ENCODE measurements at regions of chr14 and their contacts with region 1.

Region 1: GRCh38 chr14:71591929-71592328 is 340.3 kb upstream of the RGS6 start:
- DNase-seq: no peak
- H3K4me3 Mint-ChIP-seq: no peak overlapping the region
- H3K27ac Mint-ChIP-seq: peak overlapping the region; percentile 60
- H3K4me1 Mint-ChIP-seq: peaks cover 70% of the 10 kb centered on the region
- H3K27me3 Mint-ChIP-seq: no peaks in the 10 kb centered on the region

Region 2: DNA sequence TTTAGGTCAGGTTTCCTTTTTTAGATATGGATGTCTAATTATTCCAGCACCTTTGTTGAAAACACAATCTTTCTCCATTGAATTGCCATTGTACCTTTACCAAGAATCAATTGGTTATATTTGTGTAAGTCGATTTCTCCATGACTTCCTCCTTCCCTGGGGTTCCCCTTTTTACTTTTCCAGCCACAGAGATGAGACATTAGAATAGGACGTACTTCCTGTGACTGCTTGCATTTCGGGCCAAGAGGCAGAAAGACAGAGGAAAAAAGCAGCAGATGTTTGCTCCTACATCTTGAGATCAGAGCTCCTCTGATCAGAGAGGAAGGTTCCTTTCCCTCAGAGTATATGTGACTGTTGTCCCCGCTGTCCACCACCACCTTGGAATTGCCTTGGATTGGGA is 113.4 kb before region 1 on chr14:
- intact Hi-C with region 1: loop called (anchors 5 kb)
- DNase-seq: no peak
- H3K4me3 Mint-ChIP-seq: no peak overlapping the region
- H3K27ac Mint-ChIP-seq: peak overlapping the region; percentile 14
- H3K4me1 Mint-ChIP-seq: peaks cover 48% of the 10 kb centered on the region
- H3K27me3 Mint-ChIP-seq: no peaks in the 10 kb centered on the region

Region 3: GRCh38 chr14:71659161-71659560 is 67.2 kb after region 1 on chr14:
- intact Hi-C with region 1: loop called (anchors 2 kb)
- DNase-seq: no peak
- H3K4me3 Mint-ChIP-seq: no peak overlapping the region
- H3K27ac Mint-ChIP-seq: peak overlapping the region; percentile 9
- H3K4me1 Mint-ChIP-seq: peaks cover 33% of the 10 kb centered on the region
- H3K27me3 Mint-ChIP-seq: no peaks in the 10 kb centered on the region

Region 4: GRCh38 chr14:71942904-71943694 is 351.2 kb after region 1 on chr14:
- intact Hi-C with region 1: no loop called
- DNase-seq: no peak
- H3K4me3 Mint-ChIP-seq: no peak overlapping the region
- H3K27ac Mint-ChIP-seq: no peak overlapping the region
- H3K4me1 Mint-ChIP-seq: no peaks in the 10 kb centered on the region
- H3K27me3 Mint-ChIP-seq: peaks cover 21% of the 10 kb centered on the region

Measured in activated T-helper 2 cell treated with anti-CD3 and anti-CD28 coated beads, Interferon-gamma antibody, Interleukin-2, Interleukin-4, amounts not matched to agents 10 μg/mL and 5 μg/mL and 100 μg/mL, durations not matched to agents 14 hours and 24 hours and 36 hours (primary cell).